Naive thymus-derived CD4-positive, alpha-beta T cell (primary cell): ENCODE measurements at regions of chr6 and their contacts with region 1.

Region 1: DNA sequence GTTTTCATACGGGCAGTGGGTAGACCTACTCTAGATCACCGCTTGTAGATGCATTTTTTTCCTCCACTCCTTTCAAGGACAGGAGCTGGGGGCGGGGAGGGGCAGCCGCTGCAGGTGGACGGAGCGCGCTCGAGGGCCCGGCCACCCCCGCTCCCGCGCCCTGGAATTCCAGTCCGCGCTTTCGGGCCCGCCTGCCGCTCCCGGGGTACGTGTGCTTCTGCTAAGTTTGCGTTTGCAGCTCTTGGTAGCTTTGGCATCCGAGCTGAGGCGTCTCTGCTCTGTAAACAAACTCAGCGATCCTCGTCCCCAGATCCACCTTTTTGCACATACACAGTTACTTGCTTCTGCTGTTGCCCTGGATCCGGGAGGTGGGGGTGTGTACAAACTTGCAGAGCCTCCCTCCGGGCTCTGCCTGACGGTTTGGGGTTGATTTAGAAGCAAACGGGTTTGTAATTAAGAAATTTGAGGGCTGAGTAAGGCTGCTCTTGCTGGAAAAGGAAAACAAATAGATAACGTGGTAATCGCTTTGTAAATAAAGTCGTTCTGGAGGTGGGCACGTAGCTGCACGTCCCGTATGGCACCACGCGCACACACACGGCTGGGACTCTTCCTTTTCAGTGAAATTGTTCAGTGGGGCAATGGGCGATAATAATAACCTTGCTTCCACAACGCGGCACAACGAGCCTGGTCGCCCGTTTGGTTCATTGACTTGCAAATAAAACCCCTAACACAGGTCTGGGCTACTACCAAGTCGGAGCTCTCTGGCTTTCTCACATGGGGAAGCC is 976 bp upstream of the CITED2 start:
- DNase-seq: peak; percentile 70 to 91 (median 88)
- ATAC-seq: peak; percentile 68
- H3K4me3 ChIP-seq: peak overlapping the region; percentile 71
- H3K4me3 Mint-ChIP-seq: peak overlapping the region; percentile 95 to 100 (median 100)
- H3K27ac ChIP-seq: peak overlapping the region; percentile 82
- H3K27ac Mint-ChIP-seq: peak overlapping the region; percentile 95 to 100 (median 98)
- H3K4me1 ChIP-seq: peaks cover 20 to 26% of the 10 kb centered on the region in 2 donors
- H3K4me1 Mint-ChIP-seq: peaks cover 21 to 38% (median 26%) of the 10 kb centered on the region in 7 donors
- H3K27me3 ChIP-seq: no peaks in the 10 kb centered on the region
- H3K27me3 Mint-ChIP-seq: no peaks in the 10 kb centered on the region

Region 2: DNA sequence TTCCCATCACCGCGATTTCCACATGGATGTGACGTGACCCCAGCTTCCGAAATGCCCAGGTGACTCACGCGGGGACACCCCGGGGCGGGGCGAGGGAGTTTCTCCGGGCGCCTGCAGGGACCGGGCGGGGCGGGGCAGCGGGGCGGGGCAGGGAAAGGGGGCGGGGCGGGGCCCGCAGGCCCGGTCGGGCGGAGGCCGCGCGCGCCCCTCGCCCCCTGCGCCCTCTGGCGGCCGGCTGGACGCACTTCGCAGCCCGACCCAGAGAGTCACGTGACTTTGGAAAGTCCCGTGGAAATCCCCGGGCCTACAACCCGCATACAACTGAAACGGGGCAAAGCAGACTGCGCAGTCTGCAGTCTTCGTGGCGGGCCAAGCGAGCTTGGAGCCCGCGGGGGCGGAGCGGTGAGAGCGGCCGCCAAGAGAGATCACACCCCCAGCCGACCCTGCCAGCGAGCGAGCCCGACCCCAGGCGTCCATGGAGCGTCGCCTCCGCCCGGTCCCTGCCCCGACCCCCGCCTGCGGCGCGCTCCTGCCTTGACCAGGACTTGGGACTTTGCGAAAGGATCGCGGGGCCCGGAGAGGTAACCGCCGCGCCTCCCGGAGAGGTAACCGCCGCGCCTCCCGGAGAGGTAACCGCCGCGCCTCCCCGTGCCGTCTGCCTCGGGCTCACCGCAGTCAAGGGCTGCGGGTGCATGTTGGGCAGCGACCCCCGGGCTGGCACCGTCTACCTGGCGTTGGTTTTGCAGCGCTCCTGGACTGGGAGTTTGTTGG is 1508.3 kb before region 1 on chr6 and contains the start of gene TNFAIP3:
- CTCF ChIA-PET with region 1: no interaction called
- POLR2A ChIA-PET with region 1: interaction called, 3 read pairs
- intact Hi-C with region 1: loop called in 1 of 2 experiments (anchors 10 kb)
- DNase-seq: peak; percentile 94 to 98 (median 96)
- ATAC-seq: peak; percentile 85
- H3K4me3 ChIP-seq: peak within 1 kb of the TSS; percentile 96
- H3K4me3 Mint-ChIP-seq: peak within 1 kb of the TSS; percentile 88 to 98 (median 94)
- H3K27ac ChIP-seq: peak within 1 kb of the TSS; percentile 99
- H3K27ac Mint-ChIP-seq: peak within 1 kb of the TSS; percentile 89 to 100 (median 99)
- H3K4me1 ChIP-seq: peaks cover 13 to 27% of the 10 kb centered on the region in 2 donors
- H3K4me1 Mint-ChIP-seq: peaks cover 37 to 72% (median 59%) of the 10 kb centered on the region in 7 donors
- H3K27me3 ChIP-seq: no peaks in the 10 kb centered on the region
- H3K27me3 Mint-ChIP-seq: no peaks in the 10 kb centered on the region
- total RNA-seq, gene TNFAIP3: 135 to 2,915 (median 141) TPM

Region 3: DNA sequence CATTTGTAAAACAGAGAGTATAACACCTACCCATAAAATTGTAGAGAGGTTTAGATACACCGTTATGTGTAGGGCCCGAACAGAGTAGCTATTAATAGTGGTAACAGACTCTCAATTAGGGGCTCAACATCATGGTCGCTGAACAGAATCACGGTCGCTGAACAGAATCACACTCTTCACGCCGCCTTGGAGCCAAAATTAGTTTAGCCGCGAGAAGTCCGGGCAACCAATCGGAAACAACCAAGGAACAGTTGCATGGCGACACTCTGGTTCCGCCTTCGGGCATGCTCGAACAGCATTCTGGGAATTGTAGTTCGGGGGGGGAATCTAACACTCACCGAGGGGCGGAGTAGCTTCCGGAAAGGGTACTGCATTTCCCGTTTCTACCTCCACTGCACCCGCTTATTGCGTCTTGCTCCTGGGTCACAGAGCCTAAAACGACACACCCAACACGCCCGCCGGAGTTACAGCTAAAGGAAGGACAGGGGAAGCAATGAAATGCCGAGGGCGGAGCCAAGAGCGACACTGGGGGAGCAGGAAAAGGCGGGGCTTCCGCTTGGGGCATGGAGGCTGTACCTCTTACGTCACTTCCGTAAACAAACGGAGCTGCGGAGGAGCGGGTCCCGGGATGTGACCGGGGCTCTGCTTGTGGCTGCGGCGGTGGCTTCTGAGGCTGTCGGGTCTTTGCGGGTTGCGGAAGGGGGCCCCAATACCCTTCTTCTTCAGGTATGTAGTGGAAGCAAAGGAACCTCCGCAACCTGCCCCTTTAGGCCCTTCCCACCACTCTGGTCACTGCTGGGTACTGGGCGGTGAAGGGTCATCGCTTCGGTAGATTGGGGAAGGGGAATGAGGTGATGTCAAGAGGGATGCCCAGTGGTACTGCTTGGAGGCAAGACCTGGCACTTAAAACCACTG is 602.0 kb before region 1 on chr6 and contains the start of gene CCDC28A:
- CTCF ChIA-PET with region 1: interaction called, 3 read pairs
- POLR2A ChIA-PET with region 1: interaction called, 27 read pairs
- intact Hi-C with region 1: loop called (anchors 1 kb)
- DNase-seq: peak; percentile 86 to 98 (median 97)
- ATAC-seq: peak; percentile 93
- H3K4me3 ChIP-seq: peak within 1 kb of the TSS; percentile 94
- H3K4me3 Mint-ChIP-seq: peak within 1 kb of the TSS; percentile 91 to 100 (median 99)
- H3K27ac ChIP-seq: peak within 1 kb of the TSS; percentile 87
- H3K27ac Mint-ChIP-seq: peak within 1 kb of the TSS; percentile 96 to 100 (median 100)
- H3K4me1 ChIP-seq: peaks cover 6 to 10% of the 10 kb centered on the region in 2 donors
- H3K4me1 Mint-ChIP-seq: peaks cover 4 to 39% (median 36%) of the 10 kb centered on the region in 7 donors
- H3K27me3 ChIP-seq: no peaks in the 10 kb centered on the region
- H3K27me3 Mint-ChIP-seq: no peaks in the 10 kb centered on the region
- total RNA-seq, gene CCDC28A: 19.9 to 34.2 (median 25.6) TPM

Region 4: DNA sequence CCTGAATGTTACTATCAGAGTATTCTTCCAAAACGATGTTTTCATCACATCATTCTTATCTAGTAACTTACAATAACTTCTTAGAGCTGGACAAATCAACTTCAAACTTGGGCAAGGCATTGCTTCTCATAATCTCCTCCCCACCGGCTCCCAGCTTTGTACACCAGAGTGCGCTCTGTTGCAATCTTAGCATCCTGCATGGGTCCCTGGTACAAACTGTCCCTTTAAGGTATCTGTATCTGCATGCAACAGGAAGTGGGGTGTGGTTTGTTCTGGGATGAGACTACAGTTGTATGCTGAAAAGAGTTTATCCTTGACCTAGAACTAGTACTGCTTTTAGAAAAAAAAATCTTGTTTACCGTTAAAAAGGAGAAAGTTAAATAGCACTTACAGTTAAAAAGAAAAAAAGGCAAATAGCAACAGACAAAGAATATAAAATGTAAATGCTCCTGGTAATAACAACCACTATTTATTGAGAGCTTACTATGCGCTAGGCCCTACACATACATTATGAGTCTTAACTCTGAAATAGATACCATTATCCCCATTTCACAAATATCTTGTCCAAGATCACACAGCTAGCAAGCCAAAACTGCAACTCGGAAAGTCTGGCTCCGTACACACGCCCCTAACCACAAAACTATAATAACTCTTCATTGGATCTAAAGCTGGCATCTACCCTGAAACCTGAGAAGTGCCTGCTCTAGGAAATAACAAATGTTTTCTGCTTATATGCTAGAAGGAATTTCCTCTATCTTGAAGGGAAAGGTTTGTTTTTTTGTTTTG is 250.3 kb before region 1 on chr6:
- CTCF ChIA-PET with region 1: interaction called, 3 read pairs
- POLR2A ChIA-PET with region 1: interaction called, 32 read pairs
- intact Hi-C with region 1: loop called (anchors 2 kb)
- DNase-seq: peak in 8 of 9 donors; percentile 65 to 90 (median 84)
- ATAC-seq: peak; percentile 99
- H3K4me3 ChIP-seq: peak overlapping the region; percentile 31
- H3K4me3 Mint-ChIP-seq: peak overlapping the region; percentile 25 to 86 (median 68)
- H3K27ac ChIP-seq: peak overlapping the region; percentile 60
- H3K27ac Mint-ChIP-seq: peak overlapping the region; percentile 86 to 97 (median 94)
- H3K4me1 ChIP-seq: peaks cover 28 to 38% of the 10 kb centered on the region in 2 donors
- H3K4me1 Mint-ChIP-seq: peaks cover 19 to 65% (median 60%) of the 10 kb centered on the region in 7 donors
- H3K27me3 ChIP-seq: no peaks in the 10 kb centered on the region
- H3K27me3 Mint-ChIP-seq: no peaks in the 10 kb centered on the region

Region 5: DNA sequence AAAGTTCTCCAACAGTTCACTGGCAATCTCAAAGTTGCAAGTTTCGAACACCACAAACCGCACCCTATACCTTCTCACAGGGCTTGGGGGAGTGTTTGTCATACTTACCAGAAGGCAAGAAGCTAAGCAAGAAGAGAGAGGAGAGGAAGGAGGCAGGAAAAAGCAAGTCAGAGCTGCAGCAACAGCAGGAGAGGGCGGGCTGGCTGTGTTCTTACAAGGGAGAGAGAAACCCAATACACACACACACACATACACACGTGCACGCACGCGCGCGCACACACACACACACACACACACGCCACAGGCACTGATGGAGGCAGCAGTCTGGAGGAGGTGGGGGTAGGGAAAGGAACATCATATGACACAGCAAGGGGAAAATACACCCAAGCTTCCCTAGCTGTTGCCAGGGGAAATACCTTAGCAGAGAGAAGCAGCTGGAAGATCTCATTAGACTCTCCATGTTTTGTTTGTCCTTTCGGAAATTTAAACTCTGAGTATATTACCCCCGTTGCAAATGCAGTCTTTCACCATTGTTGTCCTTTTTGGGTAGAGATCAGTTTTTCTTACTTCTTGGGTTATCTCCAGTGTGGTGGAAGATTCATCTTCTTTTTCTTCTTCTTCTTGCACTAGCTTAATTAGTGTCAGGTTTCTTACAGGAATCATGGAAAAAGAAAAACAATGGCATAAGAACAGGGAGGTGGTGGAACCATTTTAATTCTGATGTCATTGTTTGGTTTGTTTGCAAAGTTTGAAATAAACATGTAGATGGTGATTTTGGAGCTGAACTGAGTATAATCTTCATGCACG is 83.4 kb before region 1 on chr6 and contains the start of gene TXLNB:
- CTCF ChIA-PET with region 1: interaction called, 4 read pairs
- POLR2A ChIA-PET with region 1: interaction called, 81 read pairs
- intact Hi-C with region 1: loop called (anchors 1 kb)
- DNase-seq: peak; percentile 32 to 94 (median 87)
- ATAC-seq: peak; percentile 92
- H3K4me3 ChIP-seq: peak within 1 kb of the TSS; percentile 42
- H3K4me3 Mint-ChIP-seq: peak within 1 kb of the TSS; percentile 80 to 92 (median 90)
- H3K27ac ChIP-seq: peak within 1 kb of the TSS; percentile 75
- H3K27ac Mint-ChIP-seq: peak within 1 kb of the TSS; percentile 93 to 99 (median 98)
- H3K4me1 ChIP-seq: peaks cover 33 to 39% of the 10 kb centered on the region in 2 donors
- H3K4me1 Mint-ChIP-seq: peaks cover 36 to 87% (median 81%) of the 10 kb centered on the region in 7 donors
- H3K27me3 ChIP-seq: no peaks in the 10 kb centered on the region
- H3K27me3 Mint-ChIP-seq: no peaks in the 10 kb centered on the region
- total RNA-seq, gene TXLNB: 0.29 to 1.1 (median 0.66) TPM

Region 6: DNA sequence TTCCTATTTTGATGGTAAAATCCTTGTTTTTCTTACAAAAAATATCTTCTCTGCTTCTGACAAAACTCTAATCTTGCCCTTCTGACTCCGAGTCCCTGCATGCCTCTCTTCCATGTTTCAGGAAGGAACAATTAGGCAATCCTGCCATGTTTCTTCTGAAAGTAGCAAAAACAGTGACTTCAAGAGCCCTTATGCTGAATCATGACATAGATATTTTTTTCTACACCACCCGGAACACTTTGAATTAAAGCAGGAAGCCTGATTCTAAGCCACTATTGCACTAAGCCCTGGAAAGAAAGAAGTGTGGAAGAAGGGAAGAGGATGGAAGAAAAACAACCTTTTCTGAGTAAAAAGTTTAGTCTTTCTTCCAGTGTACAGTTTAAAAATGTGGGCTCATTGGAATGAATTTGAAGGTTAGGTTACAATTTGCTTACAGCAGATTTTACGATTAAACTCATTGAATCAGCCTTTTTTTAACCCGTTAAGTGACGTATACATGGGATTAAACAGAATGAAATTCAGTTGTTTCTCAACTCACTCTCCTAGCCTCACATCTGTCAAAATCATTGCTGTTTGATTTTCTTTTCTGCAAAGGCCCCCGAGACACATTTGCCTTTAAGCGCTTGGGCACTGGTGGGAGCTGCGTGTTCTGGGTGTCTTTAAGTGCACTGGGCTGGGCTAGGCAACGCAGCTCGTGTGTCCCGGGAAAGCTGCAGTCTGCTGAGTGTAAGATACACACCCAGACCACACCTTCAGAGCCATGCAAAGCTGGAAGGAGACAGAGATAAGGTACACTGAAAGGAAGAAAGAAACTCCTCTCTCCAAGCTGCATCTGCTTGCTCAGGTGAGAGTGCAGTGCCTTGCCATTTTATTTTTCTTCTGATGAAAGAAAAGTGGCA is 158.4 kb after region 1 on chr6:
- CTCF ChIA-PET with region 1: no interaction called
- POLR2A ChIA-PET with region 1: interaction called, 4 read pairs
- intact Hi-C with region 1: loop called in 1 of 2 experiments (anchors 5 kb)
- DNase-seq: no peak
- ATAC-seq: no peak
- H3K4me3 ChIP-seq: no peak overlapping the region
- H3K4me3 Mint-ChIP-seq: peak overlapping the region in 1 of 10 donors; percentile 80
- H3K27ac ChIP-seq: no peak overlapping the region
- H3K27ac Mint-ChIP-seq: peak overlapping the region in 1 of 9 donors; percentile 94
- H3K4me1 ChIP-seq: peaks cover 10 to 43% of the 10 kb centered on the region in 2 donors
- H3K4me1 Mint-ChIP-seq: peaks cover 7 to 64% (median 16%) of the 10 kb centered on the region in 7 donors
- H3K27me3 ChIP-seq: no peaks in the 10 kb centered on the region
- H3K27me3 Mint-ChIP-seq: peaks cover 0 to 8% (median 0%) of the 10 kb centered on the region in 5 donors

Region 7: DNA sequence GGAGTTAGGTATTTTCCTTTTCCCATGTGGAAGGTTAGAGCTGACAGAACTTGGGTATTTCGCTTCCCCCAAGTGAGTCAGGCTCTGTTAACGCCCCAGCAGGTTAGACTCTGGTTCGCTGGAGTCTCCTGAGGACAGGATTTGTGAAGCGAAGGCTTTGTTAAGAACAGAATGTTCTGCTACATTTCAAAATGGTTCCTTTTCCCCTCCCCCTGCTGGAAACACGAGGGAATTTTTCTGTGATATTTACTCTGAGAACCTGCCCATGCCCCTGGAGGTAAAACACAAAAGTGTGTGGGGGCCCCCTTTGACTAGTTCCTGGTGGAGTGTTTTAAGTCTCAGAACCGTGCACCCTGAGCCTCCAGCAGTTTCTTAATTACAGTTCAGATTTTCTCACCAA is 730.4 kb after region 1 on chr6:
- CTCF ChIA-PET with region 1: interaction called, 3 read pairs
- POLR2A ChIA-PET with region 1: no interaction called
- intact Hi-C with region 1: loop called (anchors 5 to 10 kb)
- DNase-seq: no peak
- ATAC-seq: no peak
- H3K4me3 ChIP-seq: no peak overlapping the region
- H3K4me3 Mint-ChIP-seq: no peak overlapping the region
- H3K27ac ChIP-seq: no peak overlapping the region
- H3K27ac Mint-ChIP-seq: no peak overlapping the region
- H3K4me1 ChIP-seq: no peaks in the 10 kb centered on the region
- H3K4me1 Mint-ChIP-seq: peaks cover 0 to 5% (median 0%) of the 10 kb centered on the region in 7 donors
- H3K27me3 ChIP-seq: no peaks in the 10 kb centered on the region
- H3K27me3 Mint-ChIP-seq: peaks cover 0 to 8% (median 2%) of the 10 kb centered on the region in 5 donors